ENCODE measurements at regions of chr15 and their contacts with region 1.

Region 1: GRCh38 chr15:92082006-92082843 is 228.7 kb downstream of the SLCO3A1 start:
- DNase-seq: peak; percentile 73
- ATAC-seq: peak; percentile 74
- H3K4me3 ChIP-seq: no peak overlapping the region
- H3K27ac ChIP-seq: no peak overlapping the region
- H3K4me1 ChIP-seq: no peaks in the 10 kb centered on the region
- H3K27me3 ChIP-seq: peaks cover 36% of the 10 kb centered on the region
- CTCF ChIP-seq: peak; percentile 88

Region 2: GRCh38 chr15:91049378-91050127 is 1032.7 kb before region 1 on chr15:
- CTCF ChIA-PET with region 1: no interaction called
- POLR2A ChIA-PET with region 1: no interaction called
- intact Hi-C with region 1: loop called (anchors 10 kb)
- DNase-seq: peak; percentile 74
- ATAC-seq: peak; percentile 90
- H3K4me3 ChIP-seq: no peak overlapping the region
- H3K27ac ChIP-seq: no peak overlapping the region
- H3K4me1 ChIP-seq: 0 out of 2 replicates have a peak, but pooled peaks cover 4% of the 10 kb centered on the region
- H3K27me3 ChIP-seq: peaks cover 28% of the 10 kb centered on the region
- CTCF ChIP-seq: peak; percentile 65

Region 3: DNA sequence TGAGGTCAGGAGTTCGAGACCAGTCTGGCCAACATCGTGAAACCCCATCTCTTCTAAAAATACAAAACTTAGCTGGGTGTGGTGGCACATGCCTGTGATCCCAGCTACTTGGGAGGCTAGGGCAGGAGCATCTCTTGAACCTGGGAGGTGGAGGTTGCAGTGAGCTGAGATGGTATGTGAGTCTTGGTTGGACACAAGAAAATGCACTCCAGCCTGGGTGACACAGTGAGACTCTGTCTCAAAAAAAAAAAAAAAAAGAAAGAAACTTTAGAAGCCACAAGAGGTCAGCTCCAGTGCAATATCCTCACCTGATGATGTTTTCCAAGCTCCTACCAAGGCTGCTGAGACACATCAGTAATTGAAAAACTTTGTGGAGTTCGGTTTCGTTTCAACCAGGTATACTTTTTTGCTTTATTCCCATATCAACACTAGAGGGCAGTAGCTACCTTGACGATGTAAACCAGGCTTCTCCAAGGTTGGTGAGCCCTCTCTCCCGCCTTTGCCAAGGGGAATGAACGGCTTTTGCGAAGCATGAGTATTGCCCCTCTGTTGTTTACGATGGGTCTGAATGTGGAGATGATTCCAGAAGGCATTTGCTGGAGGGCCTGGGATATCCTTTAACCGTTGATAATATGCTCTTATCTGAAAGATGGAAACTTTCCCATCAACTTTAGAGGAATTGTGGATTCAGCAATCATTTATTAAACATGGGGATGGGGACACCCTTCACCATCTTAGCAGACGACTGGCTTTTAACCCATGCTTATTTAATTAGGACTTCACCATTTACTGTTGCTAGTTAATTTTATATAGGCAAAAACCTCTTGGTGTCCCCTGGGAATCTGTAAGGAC is 779.4 kb before region 1 on chr15:
- CTCF ChIA-PET with region 1: no interaction called
- POLR2A ChIA-PET with region 1: no interaction called
- intact Hi-C with region 1: loop called (anchors 1 kb)
- DNase-seq: peak; percentile 78
- ATAC-seq: no peak
- H3K4me3 ChIP-seq: no peak overlapping the region
- H3K27ac ChIP-seq: no peak overlapping the region
- H3K4me1 ChIP-seq: no peaks in the 10 kb centered on the region
- H3K27me3 ChIP-seq: peaks cover 81% of the 10 kb centered on the region
- CTCF ChIP-seq: peak; percentile 79

Measured in PC-3 (cell line).